Psoas muscle (tissue), 8 donors: ENCODE measurements at regions of chr7 and their contacts with region 1.

Region 1: GRCh38 chr7:131219312-131220041 is 108.2 kb upstream of the MKLN1 start:
- DNase-seq: peak; percentile 41 to 66
- ATAC-seq: peak in 3 of 4 donors; percentile 49 to 74 (median 54)
- H3K4me3 ChIP-seq: no peak overlapping the region
- H3K27ac ChIP-seq: no peak overlapping the region
- H3K4me1 ChIP-seq: peaks cover 6% of the 10 kb centered on the region
- H3K27me3 ChIP-seq: no peaks in the 10 kb centered on the region
- CTCF ChIP-seq: no peak

Region 2: DNA sequence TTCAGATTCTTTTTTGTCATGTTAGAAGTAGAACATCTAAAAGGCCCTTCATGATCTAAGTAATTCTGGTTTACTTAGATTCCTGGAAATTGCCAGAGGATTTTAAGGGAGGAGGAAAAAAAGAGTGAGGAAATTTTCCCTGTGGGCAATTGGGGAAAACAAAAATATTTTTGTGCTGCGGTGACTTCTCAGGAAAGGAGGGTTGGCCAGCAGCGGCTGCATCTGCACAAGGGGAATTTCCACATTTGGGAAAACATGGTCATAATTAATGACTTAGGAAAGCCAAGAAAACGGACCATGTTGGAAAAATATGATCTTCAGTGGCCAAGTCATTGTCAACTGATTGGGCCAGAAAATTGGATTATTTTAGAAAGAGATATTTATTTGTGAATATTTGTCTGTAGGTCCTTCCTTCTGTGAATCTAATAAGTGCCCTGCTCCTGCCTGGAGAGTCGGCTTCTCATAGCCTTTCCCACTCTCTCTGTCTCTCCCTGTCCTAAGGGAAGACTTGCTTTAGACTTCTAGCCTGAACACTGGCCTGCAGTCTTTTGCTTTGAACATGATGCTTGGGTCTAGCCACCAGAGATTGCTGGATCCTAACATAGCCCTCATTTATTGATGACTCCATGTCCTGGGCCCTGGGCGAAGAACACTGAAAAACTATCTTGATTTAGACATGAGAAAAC is 16.0 kb before region 1 on chr7:
- intact Hi-C with region 1: loop called in 1 of 2 experiments (anchors 1 kb)
- DNase-seq: peak; percentile 33 to 72
- ATAC-seq: peak in 2 of 4 donors; percentile 28 to 56
- H3K4me3 ChIP-seq: no peak overlapping the region
- H3K27ac ChIP-seq: no peak overlapping the region
- H3K4me1 ChIP-seq: no peaks in the 10 kb centered on the region
- H3K27me3 ChIP-seq: no peaks in the 10 kb centered on the region
- CTCF ChIP-seq: no peak

Region 3: GRCh38 chr7:132257253-132257652 is 1037.8 kb after region 1 on chr7:
- intact Hi-C with region 1: no loop called
- DNase-seq: no peak
- ATAC-seq: no peak
- H3K4me3 ChIP-seq: no peak overlapping the region
- H3K27ac ChIP-seq: no peak overlapping the region
- H3K4me1 ChIP-seq: no peaks in the 10 kb centered on the region
- H3K27me3 ChIP-seq: peaks cover 0 to 3% (median 0%) of the 10 kb centered on the region in 3 donors
- CTCF ChIP-seq: no peak